Mammary epithelial cell (primary cell): ENCODE measurements at regions of chr12 and their contacts with region 1.

Region 1: GRCh38 chr12:104588068-104588920 is 131.5 kb downstream of the CHST11 start:
- DNase-seq: peak; percentile 97
- H3K4me3 ChIP-seq: peak overlapping the region; percentile 13 to 45 (median 32)
- H3K27ac ChIP-seq: peak overlapping the region; percentile 94
- H3K4me1 ChIP-seq: peaks cover 58% of the 10 kb centered on the region
- H3K27me3 ChIP-seq: no peaks in the 10 kb centered on the region
- CTCF ChIP-seq: no peak

Region 2: DNA sequence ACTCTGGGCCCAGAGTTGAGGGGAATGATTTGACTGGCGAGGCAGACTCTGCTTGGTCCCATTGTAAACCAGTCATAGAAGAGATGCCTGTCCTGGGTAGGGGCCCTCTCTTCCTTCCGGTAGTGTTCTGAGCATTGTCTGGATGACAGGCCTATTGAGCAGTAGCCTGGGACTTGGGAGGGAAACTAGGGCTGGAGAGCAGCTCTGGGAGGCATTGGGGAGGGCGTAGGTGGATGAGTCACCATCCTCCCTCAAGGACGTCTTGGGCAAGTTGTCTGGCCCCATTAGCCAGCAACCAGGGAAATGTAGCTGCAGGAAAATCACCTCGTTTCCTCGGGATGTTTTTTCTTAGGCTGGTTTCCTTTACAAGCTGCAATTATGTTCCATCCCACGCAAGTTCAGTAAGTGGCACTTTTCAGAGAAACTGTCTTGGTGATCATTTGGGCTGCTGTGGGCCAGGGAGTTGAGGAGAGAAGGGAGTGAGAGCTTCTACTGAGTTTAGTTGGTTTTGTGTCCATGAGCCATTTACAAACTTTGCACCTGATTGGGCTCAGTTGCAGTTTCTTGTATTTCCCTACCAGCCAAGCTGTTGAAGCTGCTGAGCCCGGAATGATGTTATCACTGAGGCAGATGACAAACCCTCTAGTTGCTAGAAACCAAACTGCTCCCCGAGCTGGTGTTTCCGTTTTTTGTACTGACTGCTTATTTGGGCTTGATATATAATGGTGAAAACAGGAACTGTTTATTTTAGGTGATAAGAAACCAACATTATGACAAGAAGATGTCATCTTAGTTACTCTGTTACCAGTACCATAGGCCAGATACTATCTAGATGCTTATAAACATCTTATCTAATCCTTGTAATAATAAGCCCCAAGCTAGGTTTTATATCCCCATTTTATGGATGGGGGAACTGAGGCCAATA is 16.0 kb after region 1 on chr12:
- CTCF ChIA-PET with region 1: no interaction called
- dilution Hi-C with region 1: no loop called
- in situ Hi-C with region 1: no loop called
- intact Hi-C with region 1: loop called (anchors 1 kb)
- DNase-seq: peak; percentile 94
- H3K4me3 ChIP-seq: peak overlapping the region in 2 of 3 experiments; percentile 2 to 28
- H3K27ac ChIP-seq: peak overlapping the region; percentile 84
- H3K4me1 ChIP-seq: peaks cover 48% of the 10 kb centered on the region
- H3K27me3 ChIP-seq: no peaks in the 10 kb centered on the region
- CTCF ChIP-seq: no peak

Region 3: DNA sequence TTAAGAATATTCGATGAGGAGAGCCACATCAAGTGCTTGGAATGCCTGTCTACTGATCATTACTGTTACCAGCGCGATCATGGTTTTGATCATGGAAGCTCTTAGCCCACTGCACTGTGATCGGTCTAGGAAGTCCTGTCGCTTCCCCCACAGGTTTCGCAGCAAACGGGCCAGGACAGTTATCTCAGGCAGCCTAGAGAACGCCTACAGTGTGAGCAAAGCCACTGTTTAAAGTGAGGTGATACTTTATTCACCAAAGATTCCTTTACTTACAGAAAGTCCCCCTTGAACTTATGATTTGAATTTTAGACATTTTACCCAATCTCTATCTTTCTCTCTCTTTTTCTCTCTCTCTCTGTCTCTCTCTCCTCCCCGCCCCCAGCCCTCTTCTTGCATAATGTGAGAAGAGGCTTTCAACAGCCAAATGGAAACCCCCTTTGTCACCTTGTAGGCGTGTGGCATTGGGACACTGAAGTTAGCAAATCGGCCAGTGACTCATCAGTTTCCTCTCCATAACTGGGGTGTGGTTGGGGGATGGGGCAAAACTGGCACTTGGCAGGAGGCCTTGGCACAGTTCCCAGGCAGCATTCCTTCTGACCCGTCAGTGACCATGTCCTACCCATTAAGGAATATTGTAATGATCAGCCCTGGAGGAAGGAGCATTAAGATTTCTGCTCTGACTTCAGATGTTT is 83.3 kb after region 1 on chr12:
- CTCF ChIA-PET with region 1: no interaction called
- dilution Hi-C with region 1: no loop called
- in situ Hi-C with region 1: no loop called
- intact Hi-C with region 1: loop called (anchors 1 kb)
- DNase-seq: peak; percentile 96
- H3K4me3 ChIP-seq: no peak overlapping the region
- H3K27ac ChIP-seq: peak overlapping the region; percentile 55
- H3K4me1 ChIP-seq: peaks cover 52% of the 10 kb centered on the region
- H3K27me3 ChIP-seq: no peaks in the 10 kb centered on the region
- CTCF ChIP-seq: no peak